Endothelial cell of umbilical vein (primary cell): ENCODE measurements at regions of chr3 and their contacts with region 1.

Region 1: DNA sequence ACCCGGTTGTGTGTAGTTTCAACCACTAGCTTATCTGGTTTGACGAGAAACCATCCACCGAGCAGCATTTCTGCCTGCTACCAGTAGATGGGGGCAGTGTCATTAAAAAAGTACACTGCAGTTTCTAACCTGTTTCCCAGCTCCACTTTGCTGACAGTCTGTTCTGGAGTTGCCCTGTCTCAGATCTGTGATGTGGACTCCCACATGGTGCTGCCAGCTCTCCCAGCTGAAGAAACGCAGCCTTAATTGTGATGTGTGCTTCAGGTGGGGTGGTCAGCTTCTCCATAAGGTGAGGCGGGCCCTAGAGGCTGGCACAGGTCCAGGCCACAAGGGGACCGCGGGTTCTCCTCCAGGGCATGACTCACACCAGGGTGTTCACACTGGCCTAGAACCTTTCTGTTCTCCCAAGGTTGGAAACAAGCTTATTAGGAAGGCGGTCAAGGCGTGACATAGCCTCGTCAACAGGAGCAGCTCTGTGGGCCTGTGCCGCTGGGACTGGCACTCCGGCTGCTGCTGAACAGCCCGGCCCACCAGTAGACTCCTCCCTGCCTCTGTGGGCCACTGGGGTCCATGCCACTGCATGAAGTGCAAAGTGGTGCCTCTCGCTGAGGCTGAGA is 2.9 kb upstream of the FAM43A start:
- DNase-seq: peak; percentile 89
- H3K4me3 ChIP-seq: no peak overlapping the region
- H3K27ac ChIP-seq: peak overlapping the region; percentile 46
- H3K4me1 ChIP-seq: peaks cover 18% of the 10 kb centered on the region
- H3K27me3 ChIP-seq: no peaks in the 10 kb centered on the region
- CTCF ChIP-seq: peak; percentile 83 to 89
- POLR2A ChIP-seq: no peak

Region 2: GRCh38 chr3:194439881-194440550 is 242.8 kb before region 1 on chr3:
- CTCF ChIA-PET with region 1: no interaction called
- POLR2A ChIA-PET with region 1: no interaction called
- dilution Hi-C with region 1: no loop called
- intact Hi-C with region 1: no loop called
- DNase-seq: no peak
- H3K4me3 ChIP-seq: no peak overlapping the region
- H3K27ac ChIP-seq: no peak overlapping the region
- H3K4me1 ChIP-seq: no peaks in the 10 kb centered on the region
- H3K27me3 ChIP-seq: no peaks in the 10 kb centered on the region
- CTCF ChIP-seq: no peak
- POLR2A ChIP-seq: no peak

Region 3: DNA sequence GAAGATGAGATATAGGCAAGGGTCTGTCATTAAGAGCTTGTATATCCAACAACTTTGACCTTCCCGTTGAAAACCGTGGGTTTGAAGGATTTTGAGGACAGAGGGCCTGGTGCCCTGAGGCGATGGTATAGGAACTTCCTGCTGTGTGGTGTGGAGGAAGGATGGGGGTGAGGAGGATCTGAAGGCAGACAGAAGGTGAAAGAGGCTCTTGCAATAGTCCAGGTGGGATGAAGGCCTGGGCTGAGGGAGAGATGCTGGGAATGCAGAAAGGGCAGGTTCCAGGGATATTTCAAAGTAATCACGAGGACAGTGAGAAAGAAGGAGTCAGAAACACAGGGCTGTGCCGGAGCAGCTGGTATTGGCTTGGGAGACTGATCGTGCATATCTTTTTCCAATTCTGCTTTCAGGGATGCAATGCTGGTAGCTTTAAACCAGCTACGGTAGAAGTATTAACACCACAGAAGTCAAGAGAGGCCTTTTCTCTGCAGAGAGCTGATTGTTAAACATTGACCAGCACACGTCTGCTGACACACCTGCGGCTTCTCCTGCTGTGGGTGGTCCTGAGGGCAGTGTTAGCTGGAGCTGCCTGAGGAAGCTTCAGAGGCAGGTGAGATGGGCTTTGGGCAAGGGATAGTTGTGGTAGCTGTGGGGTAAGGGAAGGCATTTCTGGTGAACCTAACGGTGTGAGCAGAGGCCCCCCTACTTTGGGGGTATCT is 23.8 kb after region 1 on chr3:
- CTCF ChIA-PET with region 1: no interaction called
- POLR2A ChIA-PET with region 1: no interaction called
- dilution Hi-C with region 1: no loop called
- intact Hi-C with region 1: no loop called
- DNase-seq: no peak
- H3K4me3 ChIP-seq: no peak overlapping the region
- H3K27ac ChIP-seq: no peak overlapping the region
- H3K4me1 ChIP-seq: peaks cover 9% of the 10 kb centered on the region
- H3K27me3 ChIP-seq: no peaks in the 10 kb centered on the region
- CTCF ChIP-seq: no peak
- POLR2A ChIP-seq: no peak

Region 4: GRCh38 chr3:194833511-194833910 is 150.7 kb after region 1 on chr3:
- CTCF ChIA-PET with region 1: interaction called, 5 read pairs
- POLR2A ChIA-PET with region 1: no interaction called
- dilution Hi-C with region 1: no loop called
- intact Hi-C with region 1: loop called (anchors 2 kb)
- DNase-seq: peak; percentile 66
- H3K4me3 ChIP-seq: no peak overlapping the region
- H3K27ac ChIP-seq: peak overlapping the region; percentile 62
- H3K4me1 ChIP-seq: peaks cover 22% of the 10 kb centered on the region
- H3K27me3 ChIP-seq: no peaks in the 10 kb centered on the region
- CTCF ChIP-seq: no peak
- POLR2A ChIP-seq: no peak

Region 5: DNA sequence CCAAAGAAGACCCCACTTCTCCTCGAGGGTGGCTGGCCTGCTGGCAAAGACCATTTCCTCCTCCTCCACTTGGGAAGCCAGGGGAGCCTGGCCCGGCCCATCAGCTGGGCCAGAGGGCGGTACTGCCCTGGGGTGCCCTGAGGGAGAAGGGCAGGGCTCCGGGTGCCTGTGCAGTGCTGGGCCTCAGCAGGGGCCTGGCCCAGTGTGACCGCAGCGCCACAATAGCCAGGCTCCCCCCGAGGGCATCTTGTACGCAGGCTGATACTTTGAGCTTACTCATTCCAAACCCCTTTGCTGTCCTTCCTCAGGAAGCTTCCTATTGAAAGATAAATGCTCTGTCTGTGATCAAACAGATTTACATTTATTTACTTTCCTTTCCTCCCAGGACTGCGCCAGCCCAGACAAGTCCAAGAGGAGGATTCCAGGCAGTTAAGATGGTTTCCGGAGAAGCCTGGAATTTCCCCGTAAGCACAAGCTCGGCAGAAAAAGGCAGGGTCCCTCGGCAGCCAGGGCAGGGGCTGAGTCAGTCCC is 348.1 kb after region 1 on chr3:
- CTCF ChIA-PET with region 1: interaction called, 22 read pairs
- POLR2A ChIA-PET with region 1: interaction called, 10 read pairs
- dilution Hi-C with region 1: no loop called
- intact Hi-C with region 1: no loop called
- DNase-seq: peak; percentile 95
- H3K4me3 ChIP-seq: no peak overlapping the region
- H3K27ac ChIP-seq: peak overlapping the region; percentile 99
- H3K4me1 ChIP-seq: peaks cover 53% of the 10 kb centered on the region
- H3K27me3 ChIP-seq: no peaks in the 10 kb centered on the region
- CTCF ChIP-seq: no peak
- POLR2A ChIP-seq: peak; percentile 65

Region 6: GRCh38 chr3:195117978-195118581 is 435.3 kb after region 1 on chr3:
- CTCF ChIA-PET with region 1: interaction called, 19 read pairs
- POLR2A ChIA-PET with region 1: interaction called, 27 read pairs
- dilution Hi-C with region 1: loop called (anchors 25 kb)
- intact Hi-C with region 1: loop called (anchors 1 kb)
- DNase-seq: peak; percentile 80
- H3K4me3 ChIP-seq: no peak overlapping the region
- H3K27ac ChIP-seq: peak overlapping the region; percentile 87
- H3K4me1 ChIP-seq: peaks cover 49% of the 10 kb centered on the region
- H3K27me3 ChIP-seq: no peaks in the 10 kb centered on the region
- CTCF ChIP-seq: peak; percentile 51 to 58
- POLR2A ChIP-seq: peak; percentile 65

Region 7: GRCh38 chr3:195172039-195172684 is 489.4 kb after region 1 on chr3:
- CTCF ChIA-PET with region 1: interaction called, 12 read pairs
- POLR2A ChIA-PET with region 1: interaction called, 3 read pairs
- dilution Hi-C with region 1: no loop called
- intact Hi-C with region 1: no loop called
- DNase-seq: peak; percentile 75
- H3K4me3 ChIP-seq: no peak overlapping the region
- H3K27ac ChIP-seq: peak overlapping the region; percentile 42
- H3K4me1 ChIP-seq: peaks cover 29% of the 10 kb centered on the region
- H3K27me3 ChIP-seq: no peaks in the 10 kb centered on the region
- CTCF ChIP-seq: no peak
- POLR2A ChIP-seq: no peak

Region 8: DNA sequence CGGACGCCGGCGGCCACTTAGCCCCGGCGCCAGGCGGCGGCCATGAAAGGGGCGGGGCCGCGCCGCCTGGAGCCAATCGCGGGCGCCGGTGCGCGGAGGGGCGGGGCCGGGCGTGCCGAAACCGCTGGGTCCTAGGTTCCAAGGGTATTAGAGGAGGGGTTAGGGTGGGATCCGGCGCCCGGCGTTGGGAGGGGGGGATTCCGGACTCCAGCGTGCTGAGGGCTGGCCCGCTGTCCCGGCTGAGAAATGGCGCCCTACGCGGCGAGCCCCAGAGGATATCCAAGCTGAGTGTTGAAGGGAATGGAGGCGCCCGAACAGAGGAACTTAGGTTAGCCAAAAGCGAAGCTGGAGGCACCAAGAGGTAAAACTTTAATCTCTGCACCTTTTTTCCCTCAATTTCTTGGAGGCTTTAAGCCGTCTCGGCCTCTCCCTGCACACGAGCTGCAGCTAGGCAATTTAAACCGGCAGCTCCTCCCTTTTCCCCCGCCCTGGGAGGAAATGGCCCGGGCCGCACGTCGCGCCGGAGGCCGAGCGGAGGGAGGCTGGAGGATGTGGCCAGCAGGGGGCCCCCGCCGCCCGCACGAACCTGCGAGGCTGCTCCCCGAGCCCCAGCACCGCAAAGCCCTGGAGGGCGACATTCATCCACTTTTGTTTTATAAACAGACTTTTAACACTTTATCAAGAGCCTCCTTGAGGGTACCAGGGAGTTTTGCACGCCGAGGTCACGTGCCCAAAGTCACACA is 588.5 kb after region 1 on chr3 and contains the start of gene XXYLT1:
- CTCF ChIA-PET with region 1: interaction called, 76 read pairs
- POLR2A ChIA-PET with region 1: interaction called, 18 read pairs
- dilution Hi-C with region 1: no loop called
- intact Hi-C with region 1: loop called (anchors 1 kb)
- DNase-seq: peak; percentile 93
- H3K4me3 ChIP-seq: peak within 1 kb of the TSS; percentile 79 to 91 (median 79)
- H3K27ac ChIP-seq: peak within 1 kb of the TSS; percentile 68
- H3K4me1 ChIP-seq: peaks cover 23% of the 10 kb centered on the region
- H3K27me3 ChIP-seq: no peaks in the 10 kb centered on the region
- CTCF ChIP-seq: peak; percentile 94 to 98
- POLR2A ChIP-seq: peak; percentile 84
- total RNA-seq, gene XXYLT1: 58.6 and 78.1 TPM in 2 replicates